Activated T-helper 1 cell treated with anti-CD3 and anti-CD28 coated beads, Interleukin-12 subunit alpha, Interleukin-12 subunit beta, Interleukin-2, Interleukin-4 antibody, amounts not matched to agents 30 ng/mL and 10 ng/mL and 1 ng/mL, durations not matched to agents 14 hours and 24 hours and 36 hours (primary cell): ENCODE measurements at regions of chr7 and their contacts with region 1.

Region 1: DNA sequence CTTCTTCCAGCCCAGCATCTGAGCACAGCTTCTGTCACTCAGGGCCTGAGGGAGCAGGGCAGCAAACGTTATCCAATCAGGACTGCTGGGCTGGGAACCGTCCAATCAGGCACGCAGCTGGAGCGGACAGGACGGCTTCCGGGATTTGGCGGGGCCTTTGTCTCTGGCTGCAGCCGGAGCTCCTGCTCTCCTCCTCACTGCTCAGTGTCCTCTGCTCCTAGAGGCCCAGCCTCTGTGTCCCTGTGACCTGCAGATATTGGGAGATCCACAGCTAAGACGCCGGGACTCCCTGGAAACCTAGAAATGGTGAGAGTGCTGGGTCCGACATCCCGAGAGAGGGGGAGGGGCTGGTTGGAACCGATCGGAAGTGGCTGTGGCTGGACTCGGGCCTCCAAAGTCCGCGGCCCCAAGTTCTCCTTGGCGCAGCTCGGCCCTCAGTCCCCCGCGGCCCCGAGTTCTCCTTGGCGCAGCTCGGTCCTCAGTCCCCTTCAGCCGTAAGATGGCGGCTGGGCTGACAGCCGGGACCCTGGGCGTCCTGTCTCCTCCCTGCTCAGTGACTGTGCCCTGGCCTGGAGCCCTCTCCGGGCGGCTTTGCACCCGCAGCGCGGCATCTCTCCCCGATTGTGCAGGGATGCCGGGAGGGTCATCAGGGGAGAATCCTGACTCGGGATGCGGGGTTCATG is at the start of gene ZNF107:
- DNase-seq: peak; percentile 83
- H3K4me3 Mint-ChIP-seq: peak within 1 kb of the TSS; percentile 96
- H3K27ac Mint-ChIP-seq: peak within 1 kb of the TSS; percentile 89
- H3K4me1 Mint-ChIP-seq: peaks cover 16% of the 10 kb centered on the region
- H3K27me3 Mint-ChIP-seq: no peaks in the 10 kb centered on the region
- total RNA-seq, gene ZNF107: 12.6 and 13.5 TPM in 2 replicates

Region 2: GRCh38 chr7:64313740-64314491 is 352.2 kb before region 1 on chr7 and contains the start of gene ZNF736:
- intact Hi-C with region 1: loop called (anchors 1 kb)
- DNase-seq: peak; percentile 82
- H3K4me3 Mint-ChIP-seq: peak within 1 kb of the TSS; percentile 96
- H3K27ac Mint-ChIP-seq: peak within 1 kb of the TSS; percentile 95
- H3K4me1 Mint-ChIP-seq: peaks cover 25% of the 10 kb centered on the region
- H3K27me3 Mint-ChIP-seq: no peaks in the 10 kb centered on the region
- total RNA-seq, gene ZNF736: 19.8 and 21.3 TPM in 2 replicates

Region 3: GRCh38 chr7:64562626-64563275 is 103.4 kb before region 1 on chr7 and contains the start of gene ZNF680:
- intact Hi-C with region 1: loop called (anchors 2 kb)
- DNase-seq: peak; percentile 85
- H3K4me3 Mint-ChIP-seq: peak within 1 kb of the TSS; percentile 99
- H3K27ac Mint-ChIP-seq: peak within 1 kb of the TSS; percentile 98
- H3K4me1 Mint-ChIP-seq: peaks cover 18% of the 10 kb centered on the region
- H3K27me3 Mint-ChIP-seq: no peaks in the 10 kb centered on the region
- total RNA-seq, gene ZNF680: 8.5 and 12.2 TPM in 2 replicates

Region 4: GRCh38 chr7:64706625-64707292 is 40.6 kb after region 1 on chr7:
- intact Hi-C with region 1: loop called (anchors 5 kb)
- DNase-seq: no peak
- H3K4me3 Mint-ChIP-seq: no peak overlapping the region
- H3K27ac Mint-ChIP-seq: no peak overlapping the region
- H3K4me1 Mint-ChIP-seq: no peaks in the 10 kb centered on the region
- H3K27me3 Mint-ChIP-seq: peaks cover 1% of the 10 kb centered on the region

Region 5: DNA sequence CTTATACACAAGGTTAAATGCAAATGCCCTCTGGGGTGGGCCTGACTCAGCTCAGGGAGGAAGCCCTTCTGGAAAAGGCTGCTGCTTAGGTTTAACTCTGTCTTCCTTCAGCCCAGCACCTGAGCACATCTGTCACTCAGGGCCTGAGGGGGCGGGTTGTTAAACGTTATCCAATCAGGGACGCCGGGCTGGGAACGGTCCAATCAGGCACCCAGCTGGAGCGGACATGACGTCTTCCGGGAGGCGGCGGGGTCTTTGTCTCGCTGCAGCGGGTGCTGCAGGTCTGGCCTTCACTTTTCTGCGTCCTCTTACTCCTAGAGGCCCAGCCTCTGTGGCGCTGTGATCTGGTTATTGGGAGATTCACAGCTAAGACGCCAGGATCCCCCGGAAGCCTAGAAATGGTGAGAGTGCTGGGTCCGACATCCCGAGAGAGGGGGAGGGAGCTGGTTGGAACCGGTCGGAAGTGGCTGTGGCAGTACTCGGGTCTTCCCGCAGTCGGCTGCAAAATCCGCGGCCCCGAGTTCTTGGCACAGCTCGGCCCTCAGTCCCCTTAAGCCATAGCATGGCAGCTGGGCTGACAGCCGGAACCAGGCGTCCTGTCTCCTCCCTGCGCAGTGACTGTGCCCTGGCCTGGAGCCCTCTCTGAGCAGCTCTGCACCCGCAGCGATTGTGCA is 128.2 kb after region 1 on chr7 and contains the start of gene ZNF138:
- intact Hi-C with region 1: loop called (anchors 1 kb)
- DNase-seq: peak; percentile 90
- H3K4me3 Mint-ChIP-seq: peak within 1 kb of the TSS; percentile 98
- H3K27ac Mint-ChIP-seq: peak within 1 kb of the TSS; percentile 98
- H3K4me1 Mint-ChIP-seq: peaks cover 21% of the 10 kb centered on the region
- H3K27me3 Mint-ChIP-seq: no peaks in the 10 kb centered on the region
- total RNA-seq, gene ZNF138: 7.7 and 7.9 TPM in 2 replicates

Region 6: GRCh38 chr7:64902806-64903721 is 236.9 kb after region 1 on chr7 and contains the start of gene ZNF273:
- intact Hi-C with region 1: loop called (anchors 2 kb)
- DNase-seq: peak; percentile 87
- H3K4me3 Mint-ChIP-seq: peak within 1 kb of the TSS; percentile 98
- H3K27ac Mint-ChIP-seq: peak within 1 kb of the TSS; percentile 93
- H3K4me1 Mint-ChIP-seq: peaks cover 29% of the 10 kb centered on the region
- H3K27me3 Mint-ChIP-seq: no peaks in the 10 kb centered on the region
- total RNA-seq, gene ZNF273: 8.5 and 9.3 TPM in 2 replicates

Region 7: DNA sequence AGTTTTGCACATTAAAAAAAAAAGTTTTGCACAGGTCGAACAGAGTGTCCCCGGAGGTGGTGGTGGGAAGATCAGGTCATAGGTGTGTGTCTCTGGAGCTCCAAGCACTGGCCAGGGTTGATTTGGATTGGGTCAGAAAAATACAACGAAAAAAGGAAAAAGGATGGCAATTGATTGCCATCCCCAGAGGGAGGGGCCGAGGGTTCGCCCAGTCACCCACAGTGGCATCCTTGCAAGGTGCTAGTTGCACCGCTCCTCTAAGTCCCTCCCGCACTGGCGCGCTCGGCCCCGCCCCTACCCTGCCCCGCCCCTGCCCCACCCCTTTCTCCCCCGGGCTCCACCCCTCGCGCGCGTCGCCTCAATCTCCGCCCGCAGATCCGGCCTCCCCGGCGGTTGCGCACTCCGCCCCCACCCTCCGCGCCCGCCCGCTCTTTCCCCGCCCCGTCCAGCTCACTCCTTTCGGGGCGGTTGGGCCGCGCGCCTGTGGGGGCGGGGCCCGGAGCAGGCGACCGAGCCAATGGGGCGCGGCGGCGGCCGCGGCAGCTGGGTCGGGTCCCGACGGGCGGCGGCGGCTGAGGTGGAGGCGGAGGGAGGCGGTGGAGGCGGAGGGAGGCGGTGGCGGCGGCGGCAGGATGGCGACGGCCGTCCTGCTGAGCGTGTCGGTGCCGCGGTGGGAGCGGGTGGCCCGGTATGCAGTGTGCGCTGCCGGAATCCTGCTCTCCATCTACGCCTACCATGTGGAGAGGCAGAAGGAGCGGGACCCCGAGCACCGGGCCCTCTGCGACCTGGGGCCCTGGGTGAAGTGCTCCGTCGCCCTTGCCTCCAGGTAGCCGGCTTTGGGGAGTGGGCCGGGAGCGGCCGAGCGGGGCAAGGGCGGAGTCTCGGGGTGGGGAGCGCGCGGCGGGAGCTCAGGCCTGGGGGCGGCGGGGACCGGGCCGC is 371.9 kb after region 1 on chr7:
- intact Hi-C with region 1: loop called (anchors 2 kb)
- DNase-seq: peak; percentile 83
- H3K4me3 Mint-ChIP-seq: peak overlapping the region; percentile 79
- H3K27ac Mint-ChIP-seq: peak overlapping the region; percentile 73
- H3K4me1 Mint-ChIP-seq: peaks cover 16% of the 10 kb centered on the region
- H3K27me3 Mint-ChIP-seq: no peaks in the 10 kb centered on the region